ENCODE measurements at regions of chr13 and their contacts with region 1.

Region 1: DNA sequence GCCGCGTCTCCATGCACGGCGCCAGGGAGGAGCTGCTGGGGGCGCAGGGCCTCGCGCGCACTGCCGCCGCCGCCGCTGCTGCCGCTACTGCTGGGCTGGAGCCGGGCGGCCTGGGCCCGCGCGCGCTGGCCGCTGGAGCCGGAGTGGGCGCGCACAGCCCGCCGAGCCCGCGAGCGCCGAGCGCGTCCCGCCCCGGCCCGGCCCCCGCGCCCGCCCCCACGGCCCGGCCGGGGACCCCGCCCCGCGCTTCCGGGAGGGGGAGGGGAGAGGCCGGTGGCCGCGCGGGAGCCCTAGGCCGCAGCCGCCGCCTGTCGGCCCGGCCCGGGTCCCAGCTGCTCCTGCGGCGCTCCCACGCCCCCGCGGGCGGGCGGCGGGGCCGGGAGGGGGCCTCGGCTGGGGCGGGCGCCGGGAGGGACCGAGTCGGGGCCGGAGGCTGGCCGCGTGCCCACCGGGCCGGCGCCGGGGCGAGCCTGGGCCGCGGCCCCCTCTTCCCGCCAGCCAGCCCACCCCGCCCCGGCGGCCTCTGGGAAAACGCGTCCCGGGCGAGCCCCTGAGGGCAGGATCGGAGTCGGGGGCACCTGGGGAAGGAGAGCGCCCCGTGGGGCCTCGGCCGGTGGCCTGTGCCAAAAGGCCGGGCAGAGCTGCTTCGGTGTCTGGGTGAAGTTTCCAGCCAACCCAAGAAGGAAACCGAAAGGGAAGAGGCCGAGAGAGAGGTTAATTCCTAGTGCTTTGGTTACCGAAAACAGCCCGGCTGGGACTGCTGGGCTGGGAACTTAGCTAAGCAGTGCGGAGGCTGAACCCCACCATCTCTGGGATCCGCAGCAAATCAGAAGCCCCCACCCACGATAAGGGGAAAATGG is at the start of gene STK24:
- DNase-seq: peak; percentile 61 to 91 (median 77)
- ATAC-seq: peak; percentile 76
- H3K4me3 ChIP-seq: peak within 1 kb of the TSS; percentile 89 to 90
- H3K27ac ChIP-seq: peak within 1 kb of the TSS; percentile 91 to 95
- H3K4me1 ChIP-seq: peaks cover 24 to 53% of the 10 kb centered on the region in 2 donors
- H3K27me3 ChIP-seq: no peaks in the 10 kb centered on the region
- CTCF ChIP-seq: no peak
- polyA plus RNA-seq, gene STK24: 65.6 to 79.7 (median 74.3) TPM

Region 2: DNA sequence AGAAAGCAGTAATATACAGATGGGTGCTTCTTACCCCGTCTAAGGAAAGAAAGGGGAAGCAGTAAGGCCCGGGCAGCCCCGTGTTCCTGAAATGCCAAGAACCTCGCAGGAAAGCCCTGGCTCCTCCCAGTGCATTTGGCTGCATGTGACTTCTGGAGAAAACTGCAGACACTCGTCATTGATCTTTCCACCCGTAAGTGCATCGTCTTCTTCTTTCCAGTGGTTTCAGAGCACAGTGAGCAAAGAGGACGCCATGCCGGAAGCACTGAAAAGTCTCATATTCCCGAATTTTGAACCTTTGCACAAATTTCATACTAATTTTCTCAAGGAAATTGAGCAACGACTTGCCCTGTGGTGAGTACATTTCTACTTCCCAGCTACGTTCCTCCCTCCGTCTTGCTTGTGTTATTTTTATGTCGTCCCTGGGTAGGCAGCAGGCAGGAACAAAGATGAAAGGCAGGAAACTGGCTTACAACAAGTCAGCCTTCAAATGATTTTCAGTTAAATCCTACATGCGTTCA is 165.5 kb before region 1 on chr13:
- intact Hi-C with region 1: no loop called
- DNase-seq: peak in 1 of 4 donors; percentile 78
- ATAC-seq: peak; percentile 15
- H3K4me3 ChIP-seq: no peak overlapping the region
- H3K27ac ChIP-seq: peak overlapping the region; percentile 35 to 55
- H3K4me1 ChIP-seq: peaks cover 0 to 13% of the 10 kb centered on the region in 2 donors
- H3K27me3 ChIP-seq: no peaks in the 10 kb centered on the region
- CTCF ChIP-seq: no peak

Region 3: GRCh38 chr13:98454389-98454881 is 122.8 kb before region 1 on chr13:
- intact Hi-C with region 1: no loop called
- DNase-seq: peak in 2 of 4 donors; percentile 32 to 61
- ATAC-seq: peak; percentile 59
- H3K4me3 ChIP-seq: no peak overlapping the region
- H3K27ac ChIP-seq: peak overlapping the region in 1 of 2 donors; percentile 13
- H3K4me1 ChIP-seq: peaks cover 6% of the 10 kb centered on the region in 2 donors
- H3K27me3 ChIP-seq: no peaks in the 10 kb centered on the region
- CTCF ChIP-seq: no peak

Region 4: DNA sequence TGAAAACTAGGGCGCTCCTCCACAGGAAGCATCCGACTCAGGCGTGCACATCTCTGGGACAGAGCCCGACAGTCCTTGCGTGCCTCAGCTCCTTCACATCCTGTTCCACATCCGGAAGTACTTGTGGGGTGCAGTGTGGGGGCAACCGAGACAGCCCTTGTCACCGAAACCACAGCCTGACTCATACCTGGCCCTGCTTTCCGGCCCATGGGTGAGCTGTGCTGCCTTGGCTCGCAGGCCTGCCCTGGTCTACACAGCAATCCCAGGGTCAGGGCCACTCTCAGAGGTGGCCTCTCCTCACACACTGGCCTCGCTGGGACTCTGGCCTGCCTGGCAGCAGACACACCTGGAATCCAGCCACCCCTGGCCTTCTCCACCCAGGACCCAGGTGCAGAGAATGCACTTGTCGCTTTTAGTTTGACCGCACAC is 100.6 kb before region 1 on chr13:
- intact Hi-C with region 1: loop called in 1 of 2 experiments (anchors 10 kb)
- DNase-seq: peak in 2 of 4 donors; percentile 77 to 88
- ATAC-seq: peak; percentile 62
- H3K4me3 ChIP-seq: no peak overlapping the region
- H3K27ac ChIP-seq: peak overlapping the region in 1 of 2 donors; percentile 74
- H3K4me1 ChIP-seq: peaks cover 6 to 78% of the 10 kb centered on the region in 2 donors
- H3K27me3 ChIP-seq: no peaks in the 10 kb centered on the region
- CTCF ChIP-seq: no peak

Region 5: DNA sequence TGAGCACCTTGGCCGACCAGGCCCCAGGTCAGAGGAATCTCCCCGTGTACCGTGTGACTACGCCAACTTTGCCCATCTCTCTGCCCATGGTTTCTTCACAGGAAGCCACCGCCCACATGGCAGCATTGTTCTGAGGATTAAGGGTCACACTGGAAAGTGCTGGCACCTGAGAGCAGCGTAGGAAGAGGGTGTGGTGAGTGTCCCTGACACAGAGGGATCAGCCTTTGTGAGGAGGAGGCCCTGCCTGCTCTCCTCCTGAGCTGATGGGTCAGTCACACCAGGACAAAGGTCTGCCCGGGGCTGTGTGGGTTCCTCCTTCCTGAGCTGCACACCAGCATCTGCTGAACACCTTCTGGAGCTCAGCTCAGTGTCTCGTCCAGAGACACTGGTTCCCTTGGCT is 207.5 kb after region 1 on chr13:
- intact Hi-C with region 1: no loop called
- DNase-seq: no peak
- ATAC-seq: no peak
- H3K4me3 ChIP-seq: no peak overlapping the region
- H3K27ac ChIP-seq: no peak overlapping the region
- H3K4me1 ChIP-seq: no peaks in the 10 kb centered on the region
- H3K27me3 ChIP-seq: no peaks in the 10 kb centered on the region
- CTCF ChIP-seq: no peak